Right cardiac atrium (tissue), 5 donors: ENCODE measurements at regions of chr2 and their contacts with region 1.

Region 1: GRCh38 chr2:88059979-88060906 is 4.7 kb upstream of the KRCC1 start:
- DNase-seq: no peak
- ATAC-seq: no peak
- H3K4me3 ChIP-seq: no peak overlapping the region
- H3K27ac ChIP-seq: no peak overlapping the region
- H3K4me1 ChIP-seq: no peaks in the 10 kb centered on the region
- H3K27me3 ChIP-seq: no peaks in the 10 kb centered on the region

Region 2: DNA sequence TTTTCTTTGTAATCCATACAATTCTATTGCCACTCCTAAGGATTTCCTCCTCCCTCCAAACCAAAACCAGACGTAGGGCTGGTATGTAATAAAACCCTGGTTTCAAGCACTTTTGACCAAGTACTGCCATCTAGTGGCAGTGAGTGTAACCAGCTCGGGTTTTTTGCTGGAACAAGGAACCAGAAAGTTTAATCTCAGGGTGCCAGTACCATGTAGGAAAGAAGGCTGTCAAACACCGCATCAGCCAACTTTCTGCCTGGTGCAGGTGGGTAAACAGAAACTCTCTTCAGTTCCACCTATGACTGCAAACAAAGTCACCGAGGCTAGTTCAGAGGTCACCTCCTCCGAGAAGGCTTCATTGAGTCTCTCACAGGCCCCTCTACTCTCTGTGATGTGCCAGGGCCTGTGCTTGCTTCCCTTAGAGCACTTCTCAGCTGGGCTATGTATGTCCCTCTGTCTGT is 99.7 kb after region 1 on chr2:
- intact Hi-C with region 1: loop called (anchors 1 to 5 kb)
- DNase-seq: no peak
- ATAC-seq: peak; percentile 69 to 78
- H3K4me3 ChIP-seq: no peak overlapping the region
- H3K27ac ChIP-seq: no peak overlapping the region
- H3K4me1 ChIP-seq: no peaks in the 10 kb centered on the region
- H3K27me3 ChIP-seq: no peaks in the 10 kb centered on the region